ENCODE measurements at regions of chr1 and their contacts with region 1.

Region 1: GRCh38 chr1:114716304-114717170 is at the start of gene NRAS:
- DNase-seq: peak; percentile 96
- H3K4me3 ChIP-seq: peak within 1 kb of the TSS; percentile 65 to 86 (median 80)
- H3K27ac ChIP-seq: peak within 1 kb of the TSS; percentile 88 to 92 (median 90)
- H3K4me1 ChIP-seq: peaks cover 0 to 24% (median 19%) of the 10 kb centered on the region in 4 donors
- H3K27me3 ChIP-seq: no peaks in the 10 kb centered on the region
- CTCF ChIP-seq: no peak
- EP300 ChIP-seq: peak in 1 of 4 donors; percentile 67
- POLR2A ChIP-seq: peak; percentile 54 to 58
- total RNA-seq, gene NRAS: 13.0 to 16.1 (median 15.7) TPM

Region 2: DNA sequence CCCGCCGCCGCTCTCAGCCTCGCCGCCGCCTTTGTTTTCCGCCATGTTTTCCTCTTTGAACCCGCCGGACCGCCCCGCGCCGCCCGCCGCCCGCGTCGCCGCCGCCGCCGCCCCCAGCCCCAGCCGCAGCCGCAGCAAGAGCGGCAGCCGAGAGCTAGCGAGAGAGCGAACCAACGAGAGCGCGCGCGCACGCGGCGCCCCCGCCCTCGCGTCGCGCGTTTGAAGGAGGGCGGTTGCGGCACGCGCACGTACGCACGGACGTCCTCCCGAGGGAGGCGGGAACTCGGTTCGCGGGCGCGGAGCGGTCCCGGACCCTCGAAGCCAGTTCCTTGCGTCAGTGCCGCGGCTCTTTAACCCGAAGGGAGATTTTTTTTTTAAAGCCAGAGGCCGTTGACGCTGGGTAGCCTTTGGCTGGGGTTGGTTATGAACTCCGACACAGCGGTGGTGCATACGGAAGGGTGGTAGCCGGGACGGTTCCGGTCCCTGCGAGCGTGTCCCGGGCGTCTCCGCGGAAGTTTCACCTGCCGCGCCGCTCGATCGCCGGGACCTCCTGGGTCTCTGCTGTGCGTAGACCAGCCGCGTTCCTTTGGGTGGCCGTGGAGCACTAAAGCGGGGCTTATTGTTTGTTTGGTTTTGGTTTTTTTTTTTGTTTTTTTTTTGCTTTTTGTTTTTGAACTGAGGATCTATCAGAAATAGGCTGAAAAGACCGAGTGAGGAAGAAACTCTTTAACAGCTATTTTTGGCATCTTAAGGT is 205.3 kb before region 1 on chr1 and contains the start of gene TRIM33:
- intact Hi-C with region 1: loop called (anchors 5 kb)
- DNase-seq: peak; percentile 94
- H3K4me3 ChIP-seq: peak within 1 kb of the TSS; percentile 85 to 96 (median 86)
- H3K27ac ChIP-seq: peak within 1 kb of the TSS; percentile 88 to 98 (median 98)
- H3K4me1 ChIP-seq: peaks cover 0 to 40% (median 32%) of the 10 kb centered on the region in 4 donors
- H3K27me3 ChIP-seq: no peaks in the 10 kb centered on the region
- CTCF ChIP-seq: no peak
- EP300 ChIP-seq: peak in 1 of 4 donors; percentile 31
- POLR2A ChIP-seq: peak; percentile 57 to 77
- total RNA-seq, gene TRIM33: 38.7 to 42.0 (median 41.5) TPM

Region 3: GRCh38 chr1:114670083-114671010 is 46.2 kb before region 1 on chr1:
- intact Hi-C with region 1: loop called (anchors 1 kb)
- DNase-seq: peak; percentile 95
- H3K4me3 ChIP-seq: peak overlapping the region; percentile 63 to 88 (median 78)
- H3K27ac ChIP-seq: peak overlapping the region; percentile 66 to 79 (median 77)
- H3K4me1 ChIP-seq: peaks cover 0 to 16% (median 7%) of the 10 kb centered on the region in 4 donors
- H3K27me3 ChIP-seq: no peaks in the 10 kb centered on the region
- CTCF ChIP-seq: peak in 2 of 4 experiments; percentile 14 to 22
- EP300 ChIP-seq: no peak
- POLR2A ChIP-seq: no peak

Region 4: DNA sequence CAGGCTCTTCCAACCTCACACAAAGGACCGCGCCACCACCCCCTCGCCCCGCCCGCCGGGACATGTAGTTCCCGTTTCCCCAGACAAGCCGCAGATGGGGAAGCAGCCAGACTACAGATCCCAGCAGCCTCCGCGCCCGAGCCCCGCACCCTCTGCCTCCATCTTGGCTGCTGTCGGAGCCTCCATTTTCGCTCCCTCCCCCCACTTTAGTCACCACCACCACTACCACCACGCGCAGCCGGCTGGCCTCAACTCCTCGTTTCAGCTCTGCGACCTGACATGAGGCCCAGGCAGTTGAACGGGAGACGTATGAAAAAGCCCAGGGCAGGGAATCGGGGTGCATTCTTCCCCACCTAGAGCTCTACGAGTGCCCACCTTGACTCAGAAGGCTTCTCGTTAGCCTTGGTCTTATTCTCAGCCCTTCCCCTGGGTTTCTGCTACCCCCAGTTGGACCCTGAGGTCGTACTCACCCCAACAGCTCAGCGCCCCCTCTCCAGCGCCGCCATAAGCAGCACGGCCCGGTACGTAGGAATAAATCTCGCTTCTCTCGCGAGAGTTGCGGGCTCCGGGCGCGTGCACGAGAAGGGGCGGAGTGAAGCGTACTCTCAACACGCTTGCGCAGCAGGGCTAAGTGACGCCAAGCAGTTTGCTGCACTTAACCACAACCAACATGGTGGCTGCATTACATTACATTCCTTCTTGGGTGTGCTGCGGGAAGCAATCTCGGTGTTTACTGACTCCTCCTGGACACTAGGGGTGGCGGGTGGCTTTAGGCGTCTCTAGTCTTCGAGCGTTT is 41.1 kb after region 1 on chr1 and contains the start of gene CSDE1:
- intact Hi-C with region 1: loop called (anchors 1 kb)
- DNase-seq: peak; percentile 99
- H3K4me3 ChIP-seq: peak within 1 kb of the TSS; percentile 79 to 99 (median 88)
- H3K27ac ChIP-seq: peak within 1 kb of the TSS; percentile 97 to 100 (median 98)
- H3K4me1 ChIP-seq: peaks cover 0 to 50% (median 48%) of the 10 kb centered on the region in 4 donors
- H3K27me3 ChIP-seq: no peaks in the 10 kb centered on the region
- CTCF ChIP-seq: peak in 2 of 4 experiments; percentile 34 to 35
- EP300 ChIP-seq: peak in 1 of 4 donors; percentile 13
- POLR2A ChIP-seq: peak; percentile 89 to 90
- total RNA-seq, gene CSDE1: 1,738 to 2,762 (median 1,986) TPM